ENCODE measurements at regions of chr7 and their contacts with region 1.

Region 1: DNA sequence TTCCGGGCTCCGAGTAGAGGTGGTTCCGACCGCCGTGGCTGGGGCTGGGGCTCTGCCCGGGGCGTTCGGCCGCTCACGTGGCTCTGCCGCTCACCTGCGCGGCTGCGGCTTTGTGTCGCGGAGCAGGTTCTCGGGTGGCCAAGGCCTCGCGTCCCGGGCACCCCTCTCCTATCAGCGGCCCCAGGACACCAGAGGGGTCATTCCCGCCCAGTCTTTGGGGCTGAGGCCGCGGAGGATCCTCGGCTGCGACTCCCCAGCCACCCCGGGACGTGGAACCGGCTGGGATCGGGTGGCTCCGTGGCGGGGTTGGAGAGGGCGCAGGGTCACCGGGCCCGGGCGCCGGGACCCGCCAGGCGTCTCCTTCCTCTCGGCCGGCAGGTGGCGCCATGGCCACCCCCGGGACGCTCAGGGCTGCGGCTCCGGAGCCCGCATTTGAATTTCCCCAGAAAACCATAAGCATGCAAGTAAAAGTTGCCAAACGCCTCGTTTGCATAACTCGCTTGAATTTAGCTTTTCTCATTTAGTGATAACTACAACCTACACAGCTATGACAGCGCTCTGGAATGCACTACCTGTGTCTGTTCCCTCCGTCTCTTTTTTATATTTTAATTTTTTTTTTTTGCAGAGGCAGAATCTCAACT is 1.2 kb downstream of the COL26A1 start:
- DNase-seq: peak; percentile 16 to 96 (median 66)

Region 2: DNA sequence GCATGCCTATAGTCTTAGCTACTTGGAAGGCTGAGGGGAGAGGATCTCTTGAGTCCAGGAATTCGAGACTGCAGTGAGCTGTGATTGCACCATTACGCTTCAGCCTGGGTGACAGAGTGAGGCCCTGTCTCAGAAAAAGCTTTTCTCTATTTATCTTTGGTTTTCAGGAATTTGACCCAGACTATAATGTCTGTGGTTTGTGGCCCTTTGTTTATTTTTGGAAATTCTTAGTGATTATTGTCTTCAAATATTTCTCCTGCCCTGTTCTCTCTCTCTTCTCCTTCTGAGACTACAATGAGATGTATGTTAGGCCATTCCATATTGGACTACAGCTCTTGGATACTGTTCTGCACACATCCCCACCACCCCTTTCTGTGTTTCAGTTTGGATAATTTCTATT is 389.8 kb before region 1 on chr7:
- intact Hi-C with region 1: no loop called
- DNase-seq: no peak

Region 3: GRCh38 chr7:101321491-101322401 is 42.1 kb before region 1 on chr7 and contains the start of gene IFT22:
- intact Hi-C with region 1: loop called (anchors 2 kb)
- DNase-seq: peak; percentile 87 to 98 (median 89)

Region 4: DNA sequence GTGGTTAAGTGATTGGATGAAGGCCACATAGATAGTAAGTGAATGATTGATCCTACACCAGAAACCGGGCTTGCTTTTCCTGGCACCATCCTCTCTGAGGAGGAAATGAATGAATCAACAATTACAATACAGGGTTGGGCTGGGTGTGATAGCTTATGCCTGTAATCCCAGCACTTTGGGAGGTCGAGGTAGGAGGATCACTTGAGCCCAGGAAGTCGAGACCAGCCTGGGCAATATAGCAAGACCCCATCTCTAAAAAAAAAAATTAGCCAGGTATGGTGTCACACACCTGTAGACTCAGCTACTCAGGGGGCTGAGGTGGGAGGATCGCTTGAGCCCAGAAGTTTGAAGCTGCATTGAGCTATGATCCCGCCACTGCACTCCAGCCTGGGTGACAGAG is 110.3 kb after region 1 on chr7:
- intact Hi-C with region 1: no loop called
- DNase-seq: peak in 1 of 10 donors; percentile 11

Region 5: DNA sequence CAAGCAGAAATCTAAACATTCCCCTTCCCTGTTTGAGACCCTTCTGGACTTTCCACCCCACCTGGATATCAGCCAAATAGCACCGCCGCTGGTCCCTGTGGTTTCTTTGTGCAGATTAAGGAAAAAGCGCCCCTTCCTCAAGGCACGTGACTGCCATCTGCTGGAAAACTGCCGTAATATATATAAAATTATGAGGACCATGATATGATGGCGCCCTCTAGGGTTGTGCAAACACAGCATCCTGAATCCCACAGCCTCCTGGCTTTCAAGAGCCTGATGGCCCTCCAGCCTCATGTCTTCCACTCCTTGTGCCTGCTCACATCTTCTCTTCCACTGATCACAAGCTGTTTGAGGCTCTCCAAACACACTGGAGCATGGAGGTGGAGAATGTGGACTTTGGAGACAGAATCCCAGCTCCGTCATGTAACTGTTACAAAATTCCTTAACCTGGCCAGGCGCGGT is 144.0 kb after region 1 on chr7:
- intact Hi-C with region 1: loop called (anchors 1 kb)
- DNase-seq: peak in 2 of 10 donors; percentile 25 to 42

Measured in posterior cingulate gyrus (tissue), 11 donors.